ENCODE measurements at regions of chr1 and their contacts with region 1.

Region 1: DNA sequence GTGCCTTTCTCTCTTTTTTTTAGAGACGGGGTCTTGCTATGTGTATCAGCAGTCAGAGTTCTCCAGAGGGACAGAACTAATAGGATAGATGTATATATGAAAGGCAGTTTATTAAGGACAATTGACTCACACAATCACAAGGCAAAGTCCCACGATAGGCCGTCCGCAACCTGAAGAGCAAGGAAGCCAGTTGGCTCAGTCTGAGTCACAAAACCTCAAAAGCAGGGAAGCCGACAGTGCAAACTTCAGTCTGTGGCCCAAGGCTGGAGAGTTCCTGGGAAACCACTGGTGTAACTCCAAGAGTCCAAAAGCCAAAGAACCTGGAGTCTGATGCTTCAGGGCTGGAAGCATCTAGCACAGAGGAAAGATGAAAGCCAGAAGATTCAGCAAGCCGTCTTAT is 16.3 kb upstream of the H3-3A start:
- DNase-seq: no peak
- ATAC-seq: no peak
- H3K4me3 Mint-ChIP-seq: no peak overlapping the region
- H3K27ac Mint-ChIP-seq: no peak overlapping the region
- H3K4me1 Mint-ChIP-seq: no peaks in the 10 kb centered on the region
- H3K27me3 Mint-ChIP-seq: no peaks in the 10 kb centered on the region

Region 2: DNA sequence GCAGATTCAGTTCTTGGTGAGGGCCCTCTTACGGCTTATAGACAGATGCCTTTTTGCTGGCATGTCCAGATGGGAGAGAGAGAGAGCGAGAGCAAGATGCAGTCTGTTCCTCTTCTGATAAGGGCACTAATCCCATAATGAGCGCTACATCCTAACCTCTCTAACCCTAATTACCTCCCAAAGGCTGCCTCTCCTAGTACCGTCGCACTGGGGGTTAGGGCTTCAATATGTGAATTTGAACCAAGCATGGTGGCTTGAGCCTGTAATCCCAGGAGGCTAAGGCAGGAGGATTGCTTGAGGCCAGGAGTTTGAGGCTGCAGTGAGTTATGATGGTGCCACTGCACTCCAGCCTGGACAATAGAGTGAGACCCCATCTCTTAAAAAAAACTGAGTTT is 36.6 kb before region 1 on chr1:
- CTCF ChIA-PET with region 1: no interaction called
- POLR2A ChIA-PET with region 1: no interaction called
- intact Hi-C with region 1: loop called in 1 of 2 experiments (anchors 5 kb)
- DNase-seq: no peak
- ATAC-seq: no peak
- H3K4me3 Mint-ChIP-seq: no peak overlapping the region
- H3K27ac Mint-ChIP-seq: no peak overlapping the region
- H3K4me1 Mint-ChIP-seq: peaks cover 9% of the 10 kb centered on the region
- H3K27me3 Mint-ChIP-seq: no peaks in the 10 kb centered on the region